Activated T-helper 1 cell treated with anti-CD3 and anti-CD28 coated beads, Interleukin-12 subunit alpha, Interleukin-12 subunit beta, Interleukin-2, Interleukin-4 antibody, amounts not matched to agents 30 ng/mL and 10 ng/mL and 1 ng/mL, durations not matched to agents 14 hours and 24 hours and 36 hours (primary cell): ENCODE measurements at regions of chr12 and their contacts with region 1.

Region 1: GRCh38 chr12:131894313-131894860 is at the start of gene ULK1:
- DNase-seq: peak; percentile 91
- H3K4me3 Mint-ChIP-seq: peak within 1 kb of the TSS; percentile 86
- H3K27ac Mint-ChIP-seq: peak within 1 kb of the TSS; percentile 78
- H3K4me1 Mint-ChIP-seq: no peaks in the 10 kb centered on the region
- H3K27me3 Mint-ChIP-seq: peaks cover 5% of the 10 kb centered on the region
- total RNA-seq, gene ULK1: 28.4 TPM in 2 replicates

Region 2: GRCh38 chr12:131684015-131684725 is 210.2 kb before region 1 on chr12:
- intact Hi-C with region 1: loop called (anchors 10 kb)
- DNase-seq: no peak
- H3K4me3 Mint-ChIP-seq: no peak overlapping the region
- H3K27ac Mint-ChIP-seq: no peak overlapping the region
- H3K4me1 Mint-ChIP-seq: peaks cover 15% of the 10 kb centered on the region
- H3K27me3 Mint-ChIP-seq: no peaks in the 10 kb centered on the region

Region 3: GRCh38 chr12:131710464-131711457 is 183.6 kb before region 1 on chr12 and contains the start of gene SFSWAP:
- intact Hi-C with region 1: loop called (anchors 5 kb)
- DNase-seq: peak; percentile 72
- H3K4me3 Mint-ChIP-seq: peak within 1 kb of the TSS; percentile 93
- H3K27ac Mint-ChIP-seq: peak within 1 kb of the TSS; percentile 92
- H3K4me1 Mint-ChIP-seq: peaks cover 26% of the 10 kb centered on the region
- H3K27me3 Mint-ChIP-seq: peaks cover 4% of the 10 kb centered on the region
- total RNA-seq, gene SFSWAP: 65.3 and 69.3 TPM in 2 replicates

Region 4: GRCh38 chr12:131830335-131830913 is 64.0 kb before region 1 on chr12:
- intact Hi-C with region 1: loop called (anchors 1 kb)
- DNase-seq: peak; percentile 18
- H3K4me3 Mint-ChIP-seq: peak overlapping the region; percentile 62
- H3K27ac Mint-ChIP-seq: no peak overlapping the region
- H3K4me1 Mint-ChIP-seq: no peaks in the 10 kb centered on the region
- H3K27me3 Mint-ChIP-seq: peaks cover 38% of the 10 kb centered on the region

Region 5: GRCh38 chr12:131928711-131929580 is 34.6 kb after region 1 on chr12 and contains the start of gene PUS1:
- intact Hi-C with region 1: loop called (anchors 1 kb)
- DNase-seq: peak; percentile 93
- H3K4me3 Mint-ChIP-seq: peak within 1 kb of the TSS; percentile 98
- H3K27ac Mint-ChIP-seq: peak within 1 kb of the TSS; percentile 95
- H3K4me1 Mint-ChIP-seq: peaks cover 13% of the 10 kb centered on the region
- H3K27me3 Mint-ChIP-seq: no peaks in the 10 kb centered on the region
- total RNA-seq, gene PUS1: 92.1 and 100.0 TPM in 2 replicates

Region 6: DNA sequence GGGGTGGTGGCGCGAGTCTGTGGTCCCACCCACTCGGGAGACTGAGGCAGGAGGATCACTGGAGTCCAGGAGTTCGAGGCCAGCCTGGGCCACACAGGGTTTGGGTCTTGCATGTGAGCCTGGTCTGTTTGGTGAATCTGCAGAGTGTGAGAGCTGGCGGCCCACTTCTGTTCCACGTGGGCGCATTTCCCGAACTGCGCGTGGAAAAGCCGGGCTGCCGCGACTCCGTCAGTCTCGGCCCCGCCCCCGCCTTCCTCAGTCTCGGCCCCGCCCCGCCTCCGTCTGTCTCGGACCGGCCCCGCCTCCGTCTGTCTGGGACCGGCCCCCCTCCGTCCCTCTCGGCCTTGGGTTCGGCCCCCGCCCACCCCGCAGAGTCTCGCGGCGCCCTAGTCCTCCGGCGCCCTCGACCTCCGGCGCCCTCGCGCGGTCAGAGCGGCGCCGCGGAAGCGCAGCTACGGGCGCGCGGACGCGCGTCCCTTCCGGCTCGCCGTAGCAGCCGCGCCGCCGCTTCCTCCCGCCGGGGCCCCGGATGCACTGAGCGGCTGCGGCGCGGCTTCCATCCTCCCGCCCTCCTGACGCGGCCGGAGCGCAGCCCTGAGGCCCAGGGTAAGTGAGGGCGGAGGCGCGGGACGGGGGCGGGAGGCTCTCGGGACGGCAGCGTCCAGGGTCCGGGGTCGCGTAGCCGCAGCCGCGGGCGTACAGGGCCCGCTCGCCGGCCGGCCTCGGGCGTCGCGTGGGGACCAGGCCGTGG is 55.2 kb after region 1 on chr12 and contains the start of gene EP400:
- intact Hi-C with region 1: loop called (anchors 1 kb)
- DNase-seq: peak; percentile 89
- H3K4me3 Mint-ChIP-seq: peak within 1 kb of the TSS; percentile 92
- H3K27ac Mint-ChIP-seq: peak within 1 kb of the TSS; percentile 90
- H3K4me1 Mint-ChIP-seq: peaks cover 30% of the 10 kb centered on the region
- H3K27me3 Mint-ChIP-seq: no peaks in the 10 kb centered on the region
- total RNA-seq, gene EP400: 66.6 TPM in 2 replicates